B cell (primary cell): ENCODE measurements at regions of chr15 and their contacts with region 1.

Region 1: DNA sequence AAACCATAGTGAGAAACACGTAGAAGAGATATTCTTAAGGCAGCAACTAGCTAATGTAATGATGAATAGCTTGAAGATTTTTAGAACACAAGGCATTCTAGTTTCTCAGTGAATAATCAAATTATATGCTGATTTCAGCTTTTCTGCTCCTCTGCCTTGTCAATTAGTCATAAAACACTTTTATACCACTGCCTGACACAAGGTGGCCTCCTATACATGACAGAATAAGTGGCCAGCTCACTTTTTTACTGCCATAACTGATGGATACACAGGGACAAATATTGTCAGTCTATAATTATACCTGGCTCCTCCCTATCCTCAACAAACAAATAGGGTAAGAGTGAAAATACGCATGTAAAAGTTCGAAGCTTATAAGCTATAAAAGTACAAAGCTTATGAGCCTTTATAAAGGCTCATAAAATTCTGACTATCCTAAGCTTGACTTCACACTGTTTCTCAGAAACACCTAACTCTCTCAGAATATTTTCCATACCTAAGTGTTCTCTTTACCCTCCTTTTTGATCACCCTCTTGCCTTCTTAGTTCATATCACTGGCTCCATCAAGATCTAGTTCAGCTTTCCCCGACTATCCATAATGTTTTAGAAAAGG is 81.6 kb downstream of the HERC1 start:
- DNase-seq: peak; percentile 76
- ATAC-seq: peak; percentile 76
- H3K4me3 ChIP-seq: no peak overlapping the region
- H3K4me3 Mint-ChIP-seq: no peak overlapping the region
- H3K27ac ChIP-seq: peak overlapping the region in 1 of 2 donors; percentile 75
- H3K27ac Mint-ChIP-seq: peak overlapping the region; percentile 38
- H3K4me1 ChIP-seq: peaks cover 0 to 4% of the 10 kb centered on the region in 2 donors
- H3K4me1 Mint-ChIP-seq: peaks cover 7% of the 10 kb centered on the region
- H3K27me3 ChIP-seq: no peaks in the 10 kb centered on the region
- H3K27me3 Mint-ChIP-seq: no peaks in the 10 kb centered on the region
- CTCF ChIP-seq: peak; percentile 89

Region 2: GRCh38 chr15:63436872-63437375 is 315.3 kb before region 1 on chr15:
- CTCF ChIA-PET with region 1: no interaction called
- POLR2A ChIA-PET with region 1: no interaction called
- intact Hi-C with region 1: no loop called
- DNase-seq: no peak
- ATAC-seq: no peak
- H3K4me3 ChIP-seq: no peak overlapping the region
- H3K4me3 Mint-ChIP-seq: no peak overlapping the region
- H3K27ac ChIP-seq: no peak overlapping the region
- H3K27ac Mint-ChIP-seq: no peak overlapping the region
- H3K4me1 ChIP-seq: peaks cover 0 to 6% of the 10 kb centered on the region in 2 donors
- H3K4me1 Mint-ChIP-seq: peaks cover 2% of the 10 kb centered on the region
- H3K27me3 ChIP-seq: no peaks in the 10 kb centered on the region
- H3K27me3 Mint-ChIP-seq: peaks cover 12% of the 10 kb centered on the region
- CTCF ChIP-seq: no peak

Region 3: GRCh38 chr15:63461230-63461985 is 290.8 kb before region 1 on chr15:
- CTCF ChIA-PET with region 1: no interaction called
- POLR2A ChIA-PET with region 1: no interaction called
- intact Hi-C with region 1: no loop called
- DNase-seq: no peak
- ATAC-seq: no peak
- H3K4me3 ChIP-seq: no peak overlapping the region
- H3K4me3 Mint-ChIP-seq: no peak overlapping the region
- H3K27ac ChIP-seq: no peak overlapping the region
- H3K27ac Mint-ChIP-seq: no peak overlapping the region
- H3K4me1 ChIP-seq: peaks cover 0 to under 1% of the 10 kb centered on the region in 2 donors
- H3K4me1 Mint-ChIP-seq: peaks cover 3% of the 10 kb centered on the region
- H3K27me3 ChIP-seq: no peaks in the 10 kb centered on the region
- H3K27me3 Mint-ChIP-seq: no peaks in the 10 kb centered on the region
- CTCF ChIP-seq: no peak

Region 4: GRCh38 chr15:63712828-63713520 is 39.2 kb before region 1 on chr15:
- CTCF ChIA-PET with region 1: no interaction called
- POLR2A ChIA-PET with region 1: no interaction called
- intact Hi-C with region 1: no loop called
- DNase-seq: peak; percentile 50
- ATAC-seq: peak; percentile 89
- H3K4me3 ChIP-seq: no peak overlapping the region
- H3K4me3 Mint-ChIP-seq: peak overlapping the region; percentile 66
- H3K27ac ChIP-seq: peak overlapping the region; percentile 16 to 63
- H3K27ac Mint-ChIP-seq: peak overlapping the region; percentile 95
- H3K4me1 ChIP-seq: peaks cover 3 to 13% of the 10 kb centered on the region in 2 donors
- H3K4me1 Mint-ChIP-seq: peaks cover 18% of the 10 kb centered on the region
- H3K27me3 ChIP-seq: no peaks in the 10 kb centered on the region
- H3K27me3 Mint-ChIP-seq: no peaks in the 10 kb centered on the region
- CTCF ChIP-seq: no peak

Region 5: DNA sequence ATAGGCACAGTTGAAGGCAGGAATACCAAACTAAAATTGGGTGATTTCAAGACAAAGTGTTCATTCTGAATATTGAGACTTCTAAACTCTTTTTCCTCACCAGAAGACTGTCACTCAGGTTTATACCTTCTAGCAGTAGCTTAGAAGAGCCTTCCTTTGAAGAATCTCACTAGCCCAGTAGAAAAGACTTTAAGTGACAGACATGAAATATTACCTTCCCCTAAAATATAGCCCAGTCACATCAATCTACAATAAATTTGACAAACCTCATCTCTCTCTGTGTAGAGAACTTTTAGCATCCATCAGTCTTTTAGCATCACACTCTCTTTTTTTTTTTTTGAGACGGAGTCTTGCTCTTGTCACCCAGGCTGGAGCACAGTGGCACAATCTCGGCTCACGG is 15.9 kb before region 1 on chr15:
- CTCF ChIA-PET with region 1: interaction called, 11 read pairs
- POLR2A ChIA-PET with region 1: interaction called, 4 read pairs
- intact Hi-C with region 1: no loop called
- DNase-seq: no peak
- ATAC-seq: no peak
- H3K4me3 ChIP-seq: no peak overlapping the region
- H3K4me3 Mint-ChIP-seq: no peak overlapping the region
- H3K27ac ChIP-seq: no peak overlapping the region
- H3K27ac Mint-ChIP-seq: no peak overlapping the region
- H3K4me1 ChIP-seq: no peaks in the 10 kb centered on the region
- H3K4me1 Mint-ChIP-seq: peaks cover 1% of the 10 kb centered on the region
- H3K27me3 ChIP-seq: no peaks in the 10 kb centered on the region
- H3K27me3 Mint-ChIP-seq: no peaks in the 10 kb centered on the region
- CTCF ChIP-seq: no peak

Region 6: GRCh38 chr15:63826528-63826927 is 74.3 kb after region 1 on chr15:
- CTCF ChIA-PET with region 1: interaction called, 20 read pairs
- POLR2A ChIA-PET with region 1: no interaction called
- intact Hi-C with region 1: loop called (anchors 5 kb)
- DNase-seq: peak; percentile 62
- ATAC-seq: peak; percentile 31
- H3K4me3 ChIP-seq: no peak overlapping the region
- H3K4me3 Mint-ChIP-seq: no peak overlapping the region
- H3K27ac ChIP-seq: no peak overlapping the region
- H3K27ac Mint-ChIP-seq: peak overlapping the region; percentile 73
- H3K4me1 ChIP-seq: peaks cover 4 to 13% of the 10 kb centered on the region in 2 donors
- H3K4me1 Mint-ChIP-seq: peaks cover 58% of the 10 kb centered on the region
- H3K27me3 ChIP-seq: no peaks in the 10 kb centered on the region
- H3K27me3 Mint-ChIP-seq: no peaks in the 10 kb centered on the region
- CTCF ChIP-seq: peak; percentile 56

Region 7: DNA sequence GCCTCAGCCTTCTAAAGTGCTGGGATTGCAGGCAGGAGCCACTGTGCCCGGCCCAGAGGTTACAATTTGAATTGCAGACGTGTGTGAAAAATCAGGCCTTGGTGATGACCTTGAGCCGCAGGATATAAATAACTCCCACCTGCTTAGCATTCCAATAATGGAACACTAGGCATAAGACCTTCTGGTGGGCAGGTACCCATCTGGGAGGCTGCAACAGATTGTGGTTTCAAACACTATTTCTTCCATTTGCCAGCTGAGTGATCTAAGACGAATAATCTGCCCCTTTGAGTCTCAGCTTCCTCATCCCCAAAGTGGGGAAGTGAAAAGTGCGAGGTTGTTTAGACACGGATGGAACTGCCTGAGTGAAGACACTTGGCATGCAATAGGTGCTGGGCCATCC is 129.3 kb after region 1 on chr15:
- CTCF ChIA-PET with region 1: interaction called, 10 read pairs
- POLR2A ChIA-PET with region 1: no interaction called
- intact Hi-C with region 1: no loop called
- DNase-seq: peak; percentile 69
- ATAC-seq: peak; percentile 84
- H3K4me3 ChIP-seq: peak overlapping the region in 1 of 5 experiments; percentile 25
- H3K4me3 Mint-ChIP-seq: peak overlapping the region; percentile 69
- H3K27ac ChIP-seq: no peak overlapping the region
- H3K27ac Mint-ChIP-seq: peak overlapping the region; percentile 69
- H3K4me1 ChIP-seq: peaks cover 29% of the 10 kb centered on the region in 2 donors
- H3K4me1 Mint-ChIP-seq: peaks cover 42% of the 10 kb centered on the region
- H3K27me3 ChIP-seq: no peaks in the 10 kb centered on the region
- H3K27me3 Mint-ChIP-seq: no peaks in the 10 kb centered on the region
- CTCF ChIP-seq: no peak

Region 8: GRCh38 chr15:63945007-63945788 is 193.0 kb after region 1 on chr15:
- CTCF ChIA-PET with region 1: interaction called, 33 read pairs
- POLR2A ChIA-PET with region 1: no interaction called
- intact Hi-C with region 1: no loop called
- DNase-seq: peak; percentile 69
- ATAC-seq: peak; percentile 78
- H3K4me3 ChIP-seq: no peak overlapping the region
- H3K4me3 Mint-ChIP-seq: no peak overlapping the region
- H3K27ac ChIP-seq: no peak overlapping the region
- H3K27ac Mint-ChIP-seq: peak overlapping the region; percentile 23
- H3K4me1 ChIP-seq: peaks cover 13 to 26% of the 10 kb centered on the region in 2 donors
- H3K4me1 Mint-ChIP-seq: peaks cover 25% of the 10 kb centered on the region
- H3K27me3 ChIP-seq: peaks cover 0 to 2% (median 0%) of the 10 kb centered on the region in 4 experiments
- H3K27me3 Mint-ChIP-seq: no peaks in the 10 kb centered on the region
- CTCF ChIP-seq: peak; percentile 98

Region 9: GRCh38 chr15:64046347-64047153 is 294.4 kb after region 1 on chr15 and contains the start of gene DAPK2:
- CTCF ChIA-PET with region 1: interaction called, 82 read pairs
- POLR2A ChIA-PET with region 1: no interaction called
- intact Hi-C with region 1: loop called (anchors 1 kb)
- DNase-seq: peak; percentile 70
- ATAC-seq: peak; percentile 61
- H3K4me3 ChIP-seq: peak within 1 kb of the TSS; percentile 34 to 54 (median 43)
- H3K4me3 Mint-ChIP-seq: peak within 1 kb of the TSS; percentile 86
- H3K27ac ChIP-seq: no peak within 1 kb of the TSS
- H3K27ac Mint-ChIP-seq: peak within 1 kb of the TSS; percentile 91
- H3K4me1 ChIP-seq: peaks cover 61 to 71% of the 10 kb centered on the region in 2 donors
- H3K4me1 Mint-ChIP-seq: peaks cover 59% of the 10 kb centered on the region
- H3K27me3 ChIP-seq: no peaks in the 10 kb centered on the region
- H3K27me3 Mint-ChIP-seq: no peaks in the 10 kb centered on the region
- CTCF ChIP-seq: peak; percentile 67
- total RNA-seq, gene DAPK2: 31.0 and 31.9 TPM in 2 replicates

Region 10: DNA sequence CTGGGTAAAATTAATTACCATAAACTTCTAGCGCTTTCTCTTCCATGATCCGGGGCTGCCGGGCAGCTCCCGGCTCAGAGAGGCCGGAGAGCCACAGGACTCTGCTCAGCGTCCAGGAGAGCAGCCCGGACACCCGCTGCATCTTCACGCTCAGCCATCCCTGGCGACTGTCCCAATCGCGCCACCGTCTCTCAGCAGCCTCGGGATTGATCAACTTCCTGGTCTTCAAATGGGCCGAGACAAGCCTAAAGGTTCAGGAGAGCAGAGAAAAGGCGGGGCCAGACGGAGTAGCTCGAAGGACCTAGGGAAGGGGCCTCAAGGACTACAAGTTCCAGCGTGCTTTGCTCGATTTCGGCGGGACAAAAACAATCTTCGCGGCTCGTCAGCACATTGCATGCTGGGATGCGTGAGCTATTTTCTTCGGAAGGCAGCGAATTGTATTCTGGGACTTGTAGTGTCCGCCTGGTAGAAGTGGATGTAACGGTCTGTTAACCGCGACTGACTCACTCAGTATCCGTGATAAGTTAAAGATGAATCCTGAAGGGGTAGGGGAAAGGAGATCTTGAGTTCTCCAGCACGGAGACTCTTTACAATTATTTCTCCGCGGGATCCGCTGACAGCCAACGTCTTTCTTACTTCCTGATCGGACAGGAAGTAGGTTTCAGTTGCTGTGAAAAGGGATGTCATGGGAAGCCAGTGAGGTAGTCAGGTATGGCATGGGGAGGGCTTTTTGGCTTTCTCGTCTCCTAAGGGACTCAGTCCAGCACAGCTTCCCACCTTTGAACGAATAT is 341.6 kb after region 1 on chr15 and contains the start of gene CIAO2A:
- CTCF ChIA-PET with region 1: interaction called, 30 read pairs
- POLR2A ChIA-PET with region 1: interaction called, 4 read pairs
- intact Hi-C with region 1: no loop called
- DNase-seq: peak; percentile 96
- ATAC-seq: peak; percentile 70
- H3K4me3 ChIP-seq: peak within 1 kb of the TSS; percentile 76 to 94 (median 84)
- H3K4me3 Mint-ChIP-seq: peak within 1 kb of the TSS; percentile 97
- H3K27ac ChIP-seq: peak within 1 kb of the TSS; percentile 90 to 95
- H3K27ac Mint-ChIP-seq: peak within 1 kb of the TSS; percentile 98
- H3K4me1 ChIP-seq: peaks cover 79% of the 10 kb centered on the region in 2 donors
- H3K4me1 Mint-ChIP-seq: peaks cover 82% of the 10 kb centered on the region
- H3K27me3 ChIP-seq: no peaks in the 10 kb centered on the region
- H3K27me3 Mint-ChIP-seq: no peaks in the 10 kb centered on the region
- CTCF ChIP-seq: no peak
- total RNA-seq, gene CIAO2A: 64.4 and 68.2 TPM in 2 replicates